ENCODE measurements at regions of chr9 and their contacts with region 1.

Region 1: DNA sequence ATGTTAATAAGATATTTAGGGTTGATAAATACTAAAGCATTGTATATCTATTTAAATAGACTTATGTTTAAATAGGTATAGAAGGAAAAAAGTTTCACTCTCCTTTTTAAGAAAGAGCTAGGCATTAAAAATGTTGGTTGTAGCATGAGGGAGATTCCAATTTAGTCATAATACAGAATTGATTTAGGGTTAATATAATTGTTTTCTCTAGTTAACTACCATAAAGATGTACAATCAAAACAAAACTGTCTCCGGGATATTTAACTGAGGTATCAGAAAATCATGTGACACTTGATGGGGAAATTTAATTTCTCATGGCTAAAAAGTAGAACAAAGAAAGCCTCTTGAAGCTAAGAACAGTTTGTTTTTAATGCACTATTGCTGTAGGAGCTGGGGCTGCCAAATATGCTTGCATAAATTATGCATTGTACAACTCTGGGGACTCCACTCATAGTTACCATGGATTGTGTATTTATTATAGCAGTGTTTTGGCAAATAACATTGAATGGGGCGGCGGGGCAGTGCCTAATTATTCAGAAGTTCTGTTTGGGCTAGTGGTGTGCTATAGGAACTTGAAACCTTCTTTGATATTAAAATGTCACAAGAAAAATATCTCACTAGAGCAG is 44.2 kb downstream of the SMC2 start:
- DNase-seq: no peak
- H3K4me3 ChIP-seq: no peak overlapping the region
- H3K27ac ChIP-seq: no peak overlapping the region
- H3K4me1 ChIP-seq: no peaks in the 10 kb centered on the region
- H3K27me3 ChIP-seq: no peaks in the 10 kb centered on the region
- CTCF ChIP-seq: no peak
- EP300 ChIP-seq: no peak
- POLR2A ChIP-seq: no peak

Region 2: DNA sequence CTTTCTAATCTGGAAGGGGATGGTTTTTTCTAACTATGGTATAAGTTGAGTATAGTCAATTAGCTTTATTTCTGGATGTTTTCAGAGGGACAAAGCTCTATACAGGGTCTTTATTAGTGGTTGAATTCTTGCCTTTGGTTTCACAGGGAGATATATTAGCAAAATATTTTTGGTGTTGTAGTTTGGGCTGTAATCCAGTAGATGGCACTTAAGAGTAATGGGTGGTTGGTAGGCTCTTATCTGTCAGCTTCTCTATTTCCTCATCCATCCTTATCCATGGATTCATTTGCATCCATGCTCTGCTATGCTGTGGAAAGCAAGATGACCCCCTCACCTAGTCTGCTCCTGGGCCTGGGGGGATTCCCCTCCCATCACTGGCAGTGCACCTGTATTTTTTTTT is 1506.8 kb before region 1 on chr9:
- in situ Hi-C with region 1: no loop called
- intact Hi-C with region 1: no loop called
- DNase-seq: no peak
- H3K4me3 ChIP-seq: no peak overlapping the region
- H3K27ac ChIP-seq: no peak overlapping the region
- H3K4me1 ChIP-seq: no peaks in the 10 kb centered on the region
- H3K27me3 ChIP-seq: no peaks in the 10 kb centered on the region
- CTCF ChIP-seq: no peak
- EP300 ChIP-seq: no peak
- POLR2A ChIP-seq: no peak

Region 3: GRCh38 chr9:102841376-102841775 is 1297.0 kb before region 1 on chr9:
- in situ Hi-C with region 1: no loop called
- intact Hi-C with region 1: no loop called
- DNase-seq: peak; percentile 8
- H3K4me3 ChIP-seq: no peak overlapping the region
- H3K27ac ChIP-seq: peak overlapping the region in 1 of 4 donors; percentile 43
- H3K4me1 ChIP-seq: peaks cover 0 to 41% (median 20%) of the 10 kb centered on the region in 4 donors
- H3K27me3 ChIP-seq: no peaks in the 10 kb centered on the region
- CTCF ChIP-seq: no peak
- EP300 ChIP-seq: no peak
- POLR2A ChIP-seq: no peak

Region 4: DNA sequence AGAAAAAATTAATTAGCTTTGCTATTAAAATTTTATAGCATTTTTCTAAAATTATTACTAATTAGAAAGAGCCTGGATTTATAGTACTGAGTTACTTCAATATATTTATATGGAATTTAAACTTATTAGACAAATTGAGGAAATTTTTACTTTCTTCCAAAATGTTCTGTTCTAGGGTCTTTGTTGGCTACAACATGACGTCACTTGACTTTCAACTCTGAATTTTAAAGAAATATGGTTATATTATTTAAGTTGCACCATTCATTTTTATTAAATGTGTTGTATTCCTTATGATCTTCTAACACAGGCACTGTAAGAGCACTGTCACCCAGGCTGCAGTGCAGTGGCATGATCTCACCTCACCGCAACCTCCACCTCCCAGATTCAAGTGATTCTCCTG is 1262.7 kb before region 1 on chr9:
- in situ Hi-C with region 1: no loop called
- intact Hi-C with region 1: loop called (anchors 10 kb)
- DNase-seq: no peak
- H3K4me3 ChIP-seq: no peak overlapping the region
- H3K27ac ChIP-seq: no peak overlapping the region
- H3K4me1 ChIP-seq: no peaks in the 10 kb centered on the region
- H3K27me3 ChIP-seq: no peaks in the 10 kb centered on the region
- CTCF ChIP-seq: no peak
- EP300 ChIP-seq: no peak
- POLR2A ChIP-seq: no peak

Region 5: DNA sequence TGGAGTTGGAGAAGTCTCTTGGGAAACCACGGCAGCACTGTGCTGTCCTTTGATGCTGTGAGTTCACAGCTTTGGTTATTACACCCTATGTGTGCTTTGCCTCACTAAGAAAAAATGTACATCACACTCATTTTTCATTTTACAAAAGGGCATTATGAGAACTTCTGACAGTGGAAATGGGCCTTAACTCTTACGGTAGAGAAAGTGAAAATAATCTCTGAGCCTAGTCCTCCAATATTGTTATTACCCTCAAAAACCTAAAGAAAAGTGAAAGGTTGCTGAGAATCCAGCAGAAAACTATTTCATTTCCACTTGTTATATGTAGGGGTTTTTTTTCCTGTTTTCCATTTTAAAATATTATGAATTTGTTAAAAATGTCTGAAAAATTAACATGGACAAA is 547.7 kb after region 1 on chr9:
- in situ Hi-C with region 1: no loop called
- intact Hi-C with region 1: no loop called
- DNase-seq: no peak
- H3K4me3 ChIP-seq: no peak overlapping the region
- H3K27ac ChIP-seq: no peak overlapping the region
- H3K4me1 ChIP-seq: no peaks in the 10 kb centered on the region
- H3K27me3 ChIP-seq: no peaks in the 10 kb centered on the region
- CTCF ChIP-seq: no peak
- EP300 ChIP-seq: no peak
- POLR2A ChIP-seq: no peak